ENCODE measurements at regions of chrX and their contacts with region 1.

Region 1: GRCh38 chrX:139126493-139126892 is 404.0 kb upstream of the F9 start:
- DNase-seq: no peak
- ATAC-seq: peak; percentile 89
- H3K4me3 ChIP-seq: no peak overlapping the region
- H3K27ac ChIP-seq: no peak overlapping the region
- H3K4me1 ChIP-seq: no peaks in the 10 kb centered on the region
- H3K27me3 ChIP-seq: no peaks in the 10 kb centered on the region
- CTCF ChIP-seq: peak; percentile 45 to 56 (median 54); a peak in 5 of 6 replicates
- EP300 ChIP-seq: no peak
- POLR2A ChIP-seq: no peak
- RAD21 ChIP-seq: peak; percentile 66

Region 2: GRCh38 chrX:139077281-139078250 is 48.9 kb before region 1 on chrX:
- CTCF ChIA-PET with region 1: no interaction called
- POLR2A ChIA-PET with region 1: no interaction called
- RAD21 ChIA-PET with region 1: no interaction called
- SMC1A ChIA-PET with region 1: no interaction called
- in situ Hi-C with region 1: no loop called
- intact Hi-C with region 1: no loop called
- DNase-seq: no peak
- ATAC-seq: no peak
- H3K4me3 ChIP-seq: no peak overlapping the region
- H3K27ac ChIP-seq: no peak overlapping the region
- H3K4me1 ChIP-seq: no peaks in the 10 kb centered on the region
- H3K27me3 ChIP-seq: no peaks in the 10 kb centered on the region
- CTCF ChIP-seq: no peak
- EP300 ChIP-seq: no peak
- POLR2A ChIP-seq: no peak
- RAD21 ChIP-seq: no peak

Region 3: GRCh38 chrX:139106069-139106468 is 20.4 kb before region 1 on chrX:
- CTCF ChIA-PET with region 1: no interaction called
- POLR2A ChIA-PET with region 1: no interaction called
- RAD21 ChIA-PET with region 1: no interaction called
- SMC1A ChIA-PET with region 1: no interaction called
- in situ Hi-C with region 1: no loop called
- intact Hi-C with region 1: no loop called
- DNase-seq: no peak
- ATAC-seq: no peak
- H3K4me3 ChIP-seq: no peak overlapping the region
- H3K27ac ChIP-seq: no peak overlapping the region
- H3K4me1 ChIP-seq: no peaks in the 10 kb centered on the region
- H3K27me3 ChIP-seq: no peaks in the 10 kb centered on the region
- CTCF ChIP-seq: no peak
- EP300 ChIP-seq: no peak
- POLR2A ChIP-seq: no peak
- RAD21 ChIP-seq: no peak

Region 4: DNA sequence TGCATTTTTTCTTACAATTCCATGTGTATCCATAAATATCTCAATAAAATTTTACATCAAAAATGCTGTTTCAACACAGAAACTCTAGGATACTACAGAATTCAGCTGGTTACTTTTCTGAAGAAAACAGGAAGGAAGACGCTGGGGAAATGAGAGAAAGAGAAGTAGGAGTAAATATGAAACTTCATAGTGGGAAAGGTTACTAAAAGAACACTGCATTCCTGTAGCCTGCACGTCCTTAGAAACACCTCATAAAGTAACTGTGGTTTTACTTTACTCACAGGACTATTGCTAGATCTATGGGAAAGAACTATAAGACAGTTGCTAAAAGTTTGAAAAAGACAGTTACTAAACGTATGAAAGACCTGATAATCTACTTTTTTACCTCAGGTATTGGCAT is 783.2 kb after region 1 on chrX:
- CTCF ChIA-PET with region 1: no interaction called
- POLR2A ChIA-PET with region 1: no interaction called
- RAD21 ChIA-PET with region 1: no interaction called
- SMC1A ChIA-PET with region 1: no interaction called
- in situ Hi-C with region 1: no loop called
- intact Hi-C with region 1: no loop called
- DNase-seq: no peak
- ATAC-seq: peak; percentile 76
- H3K4me3 ChIP-seq: no peak overlapping the region
- H3K27ac ChIP-seq: peak overlapping the region; percentile 39; the same call in 1 of the 2 replicates
- H3K4me1 ChIP-seq: no peaks in the 10 kb centered on the region; the same call in none of the 2 replicates
- H3K27me3 ChIP-seq: no peaks in the 10 kb centered on the region
- CTCF ChIP-seq: no peak
- EP300 ChIP-seq: no peak
- POLR2A ChIP-seq: no peak
- RAD21 ChIP-seq: no peak

Region 5: DNA sequence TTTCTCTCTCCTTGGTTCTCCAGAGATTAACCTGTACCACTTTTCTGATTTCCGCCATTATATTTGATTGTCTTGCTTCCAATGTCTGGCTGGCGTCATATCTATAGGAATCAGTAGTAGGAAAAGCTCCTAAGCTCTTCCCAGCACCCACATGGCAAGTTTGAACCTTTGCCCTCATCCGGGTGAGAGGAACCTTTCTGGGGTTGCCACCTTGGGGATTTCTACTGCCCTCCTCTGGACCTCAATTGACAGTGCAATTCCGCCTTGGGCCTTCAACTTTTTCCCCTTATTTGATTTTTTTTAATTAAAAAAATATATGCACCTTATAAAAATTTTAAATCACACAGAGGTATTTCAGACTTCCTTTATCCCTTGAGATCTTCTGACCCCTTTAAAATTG is 840.8 kb after region 1 on chrX:
- CTCF ChIA-PET with region 1: no interaction called
- POLR2A ChIA-PET with region 1: no interaction called
- RAD21 ChIA-PET with region 1: no interaction called
- SMC1A ChIA-PET with region 1: no interaction called
- in situ Hi-C with region 1: no loop called
- intact Hi-C with region 1: loop called (anchors 10 kb)
- DNase-seq: no peak
- ATAC-seq: peak; percentile 64; the same call in 2 of the 3 replicates
- H3K4me3 ChIP-seq: no peak overlapping the region
- H3K27ac ChIP-seq: no peak overlapping the region
- H3K4me1 ChIP-seq: no peaks in the 10 kb centered on the region
- H3K27me3 ChIP-seq: no peaks in the 10 kb centered on the region
- CTCF ChIP-seq: peak; percentile 36 to 47 (median 41)
- EP300 ChIP-seq: no peak
- POLR2A ChIP-seq: no peak
- RAD21 ChIP-seq: peak; percentile 41